Panc1 (cell line): ENCODE measurements at regions of chr15 and their contacts with region 1.

Region 1: GRCh38 chr15:48324914-48325313 is 6.3 kb upstream of the DUT start:
- DNase-seq: no peak
- ATAC-seq: no peak
- H3K4me3 ChIP-seq: no peak overlapping the region
- H3K27ac ChIP-seq: no peak overlapping the region
- H3K4me1 ChIP-seq: peaks cover under 1% of the 10 kb centered on the region; the same call in 1 of the 2 replicates
- H3K27me3 ChIP-seq: no peaks in the 10 kb centered on the region
- CTCF ChIP-seq: no peak

Region 2: DNA sequence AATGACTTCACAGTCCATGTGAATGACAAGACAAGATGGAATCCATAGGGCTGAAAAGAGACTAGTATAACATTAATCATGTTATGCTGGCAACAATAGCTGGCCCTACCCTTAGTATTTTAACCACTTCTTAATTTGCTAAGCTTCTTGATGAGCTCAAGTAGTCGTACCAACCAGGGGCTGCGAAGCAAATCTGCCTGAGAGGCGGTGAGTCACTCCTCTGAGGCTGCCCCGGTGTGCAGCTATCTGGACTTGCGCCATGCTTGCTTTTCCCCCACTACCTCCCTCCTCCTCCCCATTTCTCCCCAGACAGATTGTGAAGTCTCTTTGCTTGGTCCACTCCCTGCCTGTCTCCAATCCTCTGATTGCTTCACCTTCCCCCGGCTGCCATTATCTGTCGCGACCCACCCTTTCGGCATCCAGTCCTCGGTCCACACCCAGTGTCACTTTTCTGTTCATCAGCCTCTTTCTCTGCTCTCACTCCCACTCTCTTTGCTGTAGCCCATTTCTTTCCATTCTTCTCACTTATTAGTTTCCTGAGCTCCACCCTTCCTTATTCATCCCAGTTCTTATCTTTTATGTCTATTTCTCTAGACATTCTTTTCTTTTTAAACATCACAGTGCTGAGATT is 49.0 kb after region 1 on chr15:
- CTCF ChIA-PET with region 1: no interaction called
- POLR2A ChIA-PET with region 1: no interaction called
- in situ Hi-C with region 1: no loop called
- intact Hi-C with region 1: no loop called
- DNase-seq: no peak
- ATAC-seq: no peak
- H3K4me3 ChIP-seq: no peak overlapping the region
- H3K27ac ChIP-seq: no peak overlapping the region
- H3K4me1 ChIP-seq: no peaks in the 10 kb centered on the region; the same call in 1 of the 2 replicates
- H3K27me3 ChIP-seq: peaks cover 16% of the 10 kb centered on the region
- CTCF ChIP-seq: no peak

Region 3: DNA sequence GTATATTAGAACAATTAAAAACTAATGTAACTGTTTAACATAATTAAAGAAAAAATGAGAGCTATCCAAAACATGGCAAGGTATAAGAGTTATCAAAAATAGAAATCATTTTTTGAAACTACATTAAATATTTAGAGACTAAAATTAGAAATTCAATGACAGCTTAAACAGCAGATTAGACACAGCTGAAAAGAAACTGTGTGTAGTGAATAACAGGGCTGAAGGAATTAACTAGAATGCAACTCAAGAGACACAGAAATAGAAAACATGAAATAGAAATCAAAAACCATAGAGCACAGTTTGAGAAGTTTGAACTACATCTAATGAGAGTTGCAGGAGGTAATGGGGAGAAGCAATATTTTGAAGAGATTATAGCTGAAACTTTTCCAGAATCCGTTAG is 380.5 kb after region 1 on chr15:
- CTCF ChIA-PET with region 1: interaction called, 11 read pairs
- POLR2A ChIA-PET with region 1: no interaction called
- in situ Hi-C with region 1: no loop called
- intact Hi-C with region 1: no loop called
- DNase-seq: no peak
- ATAC-seq: no peak
- H3K4me3 ChIP-seq: no peak overlapping the region
- H3K27ac ChIP-seq: no peak overlapping the region
- H3K4me1 ChIP-seq: no peaks in the 10 kb centered on the region
- H3K27me3 ChIP-seq: no peaks in the 10 kb centered on the region
- CTCF ChIP-seq: no peak